GM12878 (cell line): ENCODE measurements at regions of chrX and their contacts with region 1.

Region 1: DNA sequence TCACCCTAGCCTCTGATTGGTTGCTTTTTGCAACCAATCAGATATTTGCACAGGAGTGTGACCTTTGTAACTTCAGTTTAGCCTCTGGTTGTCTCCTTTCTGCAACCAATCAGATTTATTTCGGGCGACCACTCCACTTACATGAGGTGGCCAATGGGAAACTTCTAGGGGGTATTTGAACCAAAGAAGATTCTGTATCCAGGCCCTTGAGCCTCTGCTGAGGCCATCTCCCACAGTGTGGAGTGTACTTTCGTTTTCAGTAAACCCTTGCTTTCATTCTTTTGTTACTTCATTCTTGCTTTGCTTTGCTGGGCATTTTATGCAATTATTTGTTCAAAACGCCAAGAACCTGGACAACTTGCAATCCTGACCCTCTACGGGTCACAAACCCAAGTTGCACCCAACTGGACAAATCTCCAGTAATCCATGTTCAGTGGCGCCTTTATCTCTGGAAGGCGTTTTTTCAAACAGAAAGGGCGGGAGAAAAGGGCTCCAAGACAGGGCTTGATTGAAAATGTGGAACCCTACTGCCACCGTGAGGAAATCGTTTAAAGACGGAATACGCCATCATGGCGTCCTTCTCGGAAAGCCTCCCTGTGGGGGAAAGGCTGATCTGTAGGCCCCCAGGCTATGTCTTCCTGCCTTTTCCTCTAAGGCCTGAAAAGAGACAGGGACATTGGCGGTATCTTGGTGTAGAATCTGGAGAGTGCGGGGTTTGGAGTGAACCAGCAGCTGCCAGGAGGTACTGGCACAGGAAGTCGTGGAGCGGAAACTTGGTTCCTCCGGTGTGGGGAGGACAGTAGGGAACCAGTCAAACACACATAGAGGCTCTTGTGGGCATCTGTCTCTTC is 184.6 kb downstream of the OR13H1 start:
- DNase-seq: peak; percentile 84
- ATAC-seq: peak; percentile 91
- H3K4me3 ChIP-seq: peak overlapping the region; percentile 41; the same call in 1 of the 2 replicates
- H3K27ac ChIP-seq: peak overlapping the region; percentile 78
- H3K4me1 ChIP-seq: no peaks in the 10 kb centered on the region
- H3K27me3 ChIP-seq: no peaks in the 10 kb centered on the region
- CTCF ChIP-seq: peak; percentile 36 to 66 (median 46); a peak in 5 of 6 replicates
- EP300 ChIP-seq: no peak
- POLR2A ChIP-seq: no peak
- RAD21 ChIP-seq: peak; percentile 73

Region 2: DNA sequence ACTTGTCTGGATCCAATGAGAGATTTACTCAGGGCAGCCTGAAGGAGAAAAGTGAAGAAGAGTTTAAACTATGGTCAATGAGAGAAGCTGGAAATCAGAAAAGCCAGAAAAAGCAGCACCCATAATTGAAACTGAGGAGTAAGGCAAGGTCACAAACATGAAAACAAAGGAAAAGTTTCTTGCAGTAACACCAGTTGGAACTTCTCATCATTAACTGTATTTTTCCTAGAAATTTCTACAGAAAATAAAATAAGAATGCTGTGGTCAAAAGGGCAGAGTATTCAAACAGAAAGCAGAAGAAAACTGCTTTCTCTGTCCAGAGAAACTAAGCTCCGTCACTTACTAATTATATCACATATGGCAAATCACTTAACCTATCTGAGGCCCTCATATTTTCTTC is 82.4 kb before region 1 on chrX:
- CTCF ChIA-PET with region 1: no interaction called
- POLR2A ChIA-PET with region 1: no interaction called
- RAD21 ChIA-PET with region 1: no interaction called
- SMC1A ChIA-PET with region 1: no interaction called
- in situ Hi-C with region 1: no loop called
- intact Hi-C with region 1: no loop called
- DNase-seq: no peak
- ATAC-seq: no peak
- H3K4me3 ChIP-seq: no peak overlapping the region
- H3K27ac ChIP-seq: no peak overlapping the region
- H3K4me1 ChIP-seq: no peaks in the 10 kb centered on the region
- H3K27me3 ChIP-seq: no peaks in the 10 kb centered on the region; a peak in 1 of 4 replicates
- CTCF ChIP-seq: no peak
- EP300 ChIP-seq: no peak
- POLR2A ChIP-seq: no peak
- RAD21 ChIP-seq: no peak

Region 3: GRCh38 chrX:131710431-131711045 is 18.0 kb before region 1 on chrX:
- CTCF ChIA-PET with region 1: interaction called, 4 read pairs
- POLR2A ChIA-PET with region 1: no interaction called
- RAD21 ChIA-PET with region 1: no interaction called
- SMC1A ChIA-PET with region 1: no interaction called
- in situ Hi-C with region 1: no loop called
- intact Hi-C with region 1: loop called (anchors 1 kb)
- DNase-seq: no peak
- ATAC-seq: 0 out of 3 replicates have a peak, but pooled peaks have one; percentile 21
- H3K4me3 ChIP-seq: no peak overlapping the region
- H3K27ac ChIP-seq: peak overlapping the region; percentile 48
- H3K4me1 ChIP-seq: no peaks in the 10 kb centered on the region
- H3K27me3 ChIP-seq: no peaks in the 10 kb centered on the region
- CTCF ChIP-seq: no peak
- EP300 ChIP-seq: no peak
- POLR2A ChIP-seq: no peak
- RAD21 ChIP-seq: no peak

Region 4: DNA sequence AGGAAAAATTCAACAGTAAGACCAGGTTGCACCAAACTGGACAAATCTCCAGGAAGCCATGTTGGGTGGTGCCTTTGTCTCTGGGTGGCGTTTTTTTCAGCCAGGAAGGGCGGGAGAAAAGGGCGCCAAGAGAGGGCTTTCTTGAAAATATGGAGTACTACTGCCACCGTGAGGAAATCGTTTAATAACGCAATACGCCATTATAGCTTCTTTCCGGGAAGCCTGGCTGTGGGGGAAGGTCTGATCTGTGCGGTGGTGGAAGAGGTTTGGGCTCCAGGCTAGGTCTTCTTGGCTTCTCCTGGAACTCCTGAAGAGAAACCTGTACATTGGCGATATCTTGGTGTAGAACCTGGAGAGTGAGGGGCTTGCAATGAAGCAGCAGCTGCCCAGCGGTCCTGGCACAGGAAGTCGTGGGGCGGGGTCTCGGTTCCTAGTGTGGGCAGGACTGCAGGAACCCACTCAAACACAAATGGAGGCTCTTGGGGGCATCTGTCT is 18.0 kb after region 1 on chrX:
- CTCF ChIA-PET with region 1: interaction called, 7 read pairs
- POLR2A ChIA-PET with region 1: no interaction called
- RAD21 ChIA-PET with region 1: interaction called, 5 read pairs
- SMC1A ChIA-PET with region 1: interaction called, 3 read pairs
- in situ Hi-C with region 1: no loop called
- intact Hi-C with region 1: loop called (anchors 1 kb)
- DNase-seq: peak; percentile 87
- ATAC-seq: peak; percentile 68
- H3K4me3 ChIP-seq: peak overlapping the region; percentile 63
- H3K27ac ChIP-seq: peak overlapping the region; percentile 93
- H3K4me1 ChIP-seq: no peaks in the 10 kb centered on the region
- H3K27me3 ChIP-seq: no peaks in the 10 kb centered on the region
- CTCF ChIP-seq: peak; percentile 28 to 62 (median 41); a peak in 4 of 6 replicates
- EP300 ChIP-seq: no peak; a peak in 1 of 4 replicates
- POLR2A ChIP-seq: no peak
- RAD21 ChIP-seq: peak; percentile 58

Region 5: DNA sequence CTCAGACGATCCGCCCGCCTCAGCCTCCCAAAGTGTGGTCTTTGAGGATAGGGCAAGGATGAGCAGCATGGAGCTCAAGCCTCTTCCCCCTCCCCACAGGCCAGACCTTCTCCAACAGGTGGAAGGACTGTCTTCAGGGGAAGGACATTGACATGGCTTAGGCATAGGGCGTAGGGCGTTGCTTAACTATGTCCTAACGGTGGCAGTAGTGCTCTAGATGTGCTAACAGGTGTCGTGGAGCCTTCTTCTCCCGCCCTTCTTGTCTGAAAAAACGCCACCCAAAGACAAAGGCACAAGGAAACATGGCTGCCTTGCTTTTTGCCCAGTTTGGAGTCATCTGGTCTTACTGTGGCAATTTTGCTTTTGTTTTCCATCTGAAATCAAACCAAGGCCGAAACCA is 35.2 kb after region 1 on chrX:
- CTCF ChIA-PET with region 1: interaction called, 3 read pairs
- POLR2A ChIA-PET with region 1: no interaction called
- RAD21 ChIA-PET with region 1: no interaction called
- SMC1A ChIA-PET with region 1: no interaction called
- in situ Hi-C with region 1: no loop called
- intact Hi-C with region 1: loop called (anchors 2 kb)
- DNase-seq: peak; percentile 95
- ATAC-seq: peak; percentile 90
- H3K4me3 ChIP-seq: peak overlapping the region; percentile 51; the same call in 1 of the 2 replicates
- H3K27ac ChIP-seq: peak overlapping the region; percentile 80
- H3K4me1 ChIP-seq: no peaks in the 10 kb centered on the region
- H3K27me3 ChIP-seq: no peaks in the 10 kb centered on the region
- CTCF ChIP-seq: peak; percentile 74 to 83 (median 74)
- EP300 ChIP-seq: peak in 1 of 2 experiments; percentile 24; a peak in 1 of 4 replicates
- POLR2A ChIP-seq: no peak
- RAD21 ChIP-seq: peak; percentile 78

Region 6: GRCh38 chrX:131792789-131793462 is 64.4 kb after region 1 on chrX:
- CTCF ChIA-PET with region 1: no interaction called
- POLR2A ChIA-PET with region 1: no interaction called
- RAD21 ChIA-PET with region 1: no interaction called
- SMC1A ChIA-PET with region 1: no interaction called
- in situ Hi-C with region 1: no loop called
- intact Hi-C with region 1: loop called (anchors 1 kb)
- DNase-seq: peak; percentile 90
- ATAC-seq: peak; percentile 77
- H3K4me3 ChIP-seq: peak overlapping the region; percentile 52
- H3K27ac ChIP-seq: peak overlapping the region; percentile 91
- H3K4me1 ChIP-seq: no peaks in the 10 kb centered on the region
- H3K27me3 ChIP-seq: no peaks in the 10 kb centered on the region; a peak in 1 of 4 replicates
- CTCF ChIP-seq: peak; percentile 32 to 65 (median 41); a peak in 4 of 6 replicates
- EP300 ChIP-seq: no peak
- POLR2A ChIP-seq: no peak
- RAD21 ChIP-seq: peak; percentile 69

Region 7: GRCh38 chrX:131821945-131822622 is 93.6 kb after region 1 on chrX:
- CTCF ChIA-PET with region 1: no interaction called
- POLR2A ChIA-PET with region 1: no interaction called
- RAD21 ChIA-PET with region 1: interaction called, 3 read pairs
- SMC1A ChIA-PET with region 1: no interaction called
- in situ Hi-C with region 1: no loop called
- intact Hi-C with region 1: loop called (anchors 1 kb)
- DNase-seq: peak; percentile 85
- ATAC-seq: peak; percentile 80
- H3K4me3 ChIP-seq: peak overlapping the region; percentile 64; the same call in 1 of the 2 replicates
- H3K27ac ChIP-seq: peak overlapping the region; percentile 63
- H3K4me1 ChIP-seq: peaks cover 4% of the 10 kb centered on the region; the same call in 1 of the 2 replicates
- H3K27me3 ChIP-seq: no peaks in the 10 kb centered on the region
- CTCF ChIP-seq: peak; percentile 22 to 71 (median 48); a peak in 4 of 6 replicates
- EP300 ChIP-seq: 0 out of 4 replicates have a peak, but pooled peaks of 1 of the 2 experiments have one; percentile 32
- POLR2A ChIP-seq: no peak
- RAD21 ChIP-seq: peak; percentile 70

Region 8: GRCh38 chrX:131841496-131842410 is 113.2 kb after region 1 on chrX:
- CTCF ChIA-PET with region 1: no interaction called
- POLR2A ChIA-PET with region 1: no interaction called
- RAD21 ChIA-PET with region 1: no interaction called
- SMC1A ChIA-PET with region 1: no interaction called
- in situ Hi-C with region 1: no loop called
- intact Hi-C with region 1: no loop called
- DNase-seq: no peak
- ATAC-seq: peak; percentile 98
- H3K4me3 ChIP-seq: no peak overlapping the region
- H3K27ac ChIP-seq: no peak overlapping the region
- H3K4me1 ChIP-seq: no peaks in the 10 kb centered on the region
- H3K27me3 ChIP-seq: no peaks in the 10 kb centered on the region
- CTCF ChIP-seq: peak; percentile 85 to 90 (median 88)
- EP300 ChIP-seq: no peak
- POLR2A ChIP-seq: no peak
- RAD21 ChIP-seq: peak; percentile 96

Region 9: DNA sequence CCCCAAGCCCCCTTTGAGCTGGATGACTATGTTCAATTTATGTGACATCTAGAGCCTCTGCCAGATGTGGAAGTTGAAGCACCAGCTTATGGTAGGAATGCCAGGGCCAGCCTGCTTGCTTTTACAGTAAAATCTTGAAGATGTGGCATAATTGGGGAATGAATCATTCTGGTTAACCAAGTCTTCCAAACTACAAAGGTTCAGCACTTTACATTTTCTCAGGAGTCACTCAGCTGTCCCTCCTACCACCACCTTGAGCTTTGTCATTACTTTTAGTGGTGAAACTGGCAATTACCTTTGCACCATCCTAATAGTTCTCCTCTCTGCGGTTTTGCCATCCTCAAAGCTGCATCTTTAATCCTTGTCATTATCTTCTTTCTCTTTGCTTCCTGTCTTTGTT is 1057.7 kb after region 1 on chrX:
- CTCF ChIA-PET with region 1: no interaction called
- POLR2A ChIA-PET with region 1: no interaction called
- RAD21 ChIA-PET with region 1: no interaction called
- SMC1A ChIA-PET with region 1: no interaction called
- in situ Hi-C with region 1: no loop called
- intact Hi-C with region 1: no loop called
- DNase-seq: no peak
- ATAC-seq: no peak
- H3K4me3 ChIP-seq: no peak overlapping the region
- H3K27ac ChIP-seq: no peak overlapping the region
- H3K4me1 ChIP-seq: no peaks in the 10 kb centered on the region
- H3K27me3 ChIP-seq: no peaks in the 10 kb centered on the region
- CTCF ChIP-seq: no peak
- EP300 ChIP-seq: no peak
- POLR2A ChIP-seq: no peak
- RAD21 ChIP-seq: no peak